HCT116 (cell line): ENCODE measurements at regions of chr2 and their contacts with region 1.

Region 1: GRCh38 chr2:138846223-138846821 is 66.1 kb upstream of the NXPH2 start:
- DNase-seq: peak; percentile 21
- ATAC-seq: peak; percentile 91
- H3K4me3 ChIP-seq: no peak overlapping the region
- H3K27ac ChIP-seq: no peak overlapping the region
- H3K4me1 ChIP-seq: no peaks in the 10 kb centered on the region
- H3K27me3 ChIP-seq: no peaks in the 10 kb centered on the region
- CTCF ChIP-seq: peak; percentile 37 to 79 (median 58); a peak in 5 of 6 replicates
- POLR2A ChIP-seq: no peak
- RAD21 ChIP-seq: peak; percentile 65

Region 2: GRCh38 chr2:139031722-139032121 is 185.4 kb after region 1 on chr2:
- CTCF ChIA-PET with region 1: interaction called, 13 read pairs
- POLR2A ChIA-PET with region 1: no interaction called
- RAD21 ChIA-PET with region 1: interaction called in 1 of 2 experiments, 7 read pairs
- intact Hi-C with region 1: loop called (anchors 5 kb)
- DNase-seq: peak; percentile 48
- ATAC-seq: peak; percentile 94
- H3K4me3 ChIP-seq: no peak overlapping the region
- H3K27ac ChIP-seq: no peak overlapping the region
- H3K4me1 ChIP-seq: peaks cover 0 to 4% of the 10 kb centered on the region in 2 experiments; a peak in 1 of 4 replicates
- H3K27me3 ChIP-seq: no peaks in the 10 kb centered on the region
- CTCF ChIP-seq: peak; percentile 27 to 58 (median 54); a peak in 4 of 6 replicates
- POLR2A ChIP-seq: no peak
- RAD21 ChIP-seq: peak; percentile 84